ENCODE measurements at regions of chr10 and their contacts with region 1.

Region 1: GRCh38 chr10:110547139-110547761 is 20.2 kb upstream of the SMC3 start:
- DNase-seq: peak; percentile 71
- ATAC-seq: peak; percentile 53; the same call in 1 of the 2 replicates
- H3K4me3 ChIP-seq: no peak overlapping the region
- H3K27ac ChIP-seq: no peak overlapping the region
- H3K4me1 ChIP-seq: peaks cover 3% of the 10 kb centered on the region; the same call in 1 of the 2 replicates
- H3K27me3 ChIP-seq: no peaks in the 10 kb centered on the region
- CTCF ChIP-seq: peak; percentile 78

Region 2: GRCh38 chr10:110368002-110368401 is 179.2 kb before region 1 on chr10:
- CTCF ChIA-PET with region 1: no interaction called
- POLR2A ChIA-PET with region 1: no interaction called
- intact Hi-C with region 1: no loop called
- DNase-seq: no peak
- ATAC-seq: no peak
- H3K4me3 ChIP-seq: no peak overlapping the region
- H3K27ac ChIP-seq: no peak overlapping the region
- H3K4me1 ChIP-seq: peaks cover 24% of the 10 kb centered on the region
- H3K27me3 ChIP-seq: no peaks in the 10 kb centered on the region
- CTCF ChIP-seq: no peak

Region 3: DNA sequence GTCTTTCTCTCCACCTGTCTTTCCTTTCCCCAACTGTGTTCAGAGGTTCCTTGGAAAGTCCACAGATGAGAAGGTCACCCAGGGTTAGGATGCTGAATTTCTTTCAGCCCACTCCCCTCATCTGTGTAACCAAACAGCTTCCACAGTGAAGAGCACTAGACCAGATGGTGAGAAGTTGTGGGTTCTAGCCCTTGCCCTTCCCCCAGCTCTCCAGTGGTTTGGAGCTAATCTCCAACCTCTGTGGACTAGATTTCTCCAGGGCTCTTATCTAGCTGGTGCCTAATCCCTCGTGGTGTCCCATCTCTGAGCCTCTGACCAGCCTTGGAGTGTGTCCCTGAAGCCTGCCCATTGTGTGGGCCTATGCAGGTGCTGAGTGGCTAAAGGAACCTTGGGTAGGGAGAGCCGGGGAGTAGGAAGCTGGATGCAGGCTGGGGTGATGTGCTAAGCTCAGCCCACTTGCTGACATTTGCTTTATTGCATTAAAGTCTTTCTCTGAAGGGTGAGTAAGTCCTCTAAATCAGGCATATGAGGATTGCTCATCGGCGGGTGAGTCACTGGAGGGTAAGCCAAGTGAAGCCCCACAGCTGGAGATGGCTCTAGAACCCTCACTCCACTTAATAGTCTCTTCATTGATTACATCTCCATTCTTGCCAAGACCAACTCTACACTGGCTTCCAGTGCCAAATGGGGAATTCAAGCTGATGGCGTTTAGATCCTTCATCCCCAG is 34.6 kb before region 1 on chr10:
- CTCF ChIA-PET with region 1: no interaction called
- POLR2A ChIA-PET with region 1: no interaction called
- intact Hi-C with region 1: loop called (anchors 5 kb)
- DNase-seq: peak; percentile 80
- ATAC-seq: peak; percentile 45
- H3K4me3 ChIP-seq: no peak overlapping the region
- H3K27ac ChIP-seq: peak overlapping the region; percentile 60
- H3K4me1 ChIP-seq: peaks cover 21% of the 10 kb centered on the region; the same call in 1 of the 2 replicates
- H3K27me3 ChIP-seq: no peaks in the 10 kb centered on the region
- CTCF ChIP-seq: no peak

Measured in PC-3 (cell line).